Activated CD4-positive, alpha-beta T cell treated with anti-CD3 and anti-CD28 coated beads, Interleukin-2, amount 10 ng/mL, durations not matched to agents 24 days and 14 days (primary cell): ENCODE measurements at regions of chr11 and their contacts with region 1.

Region 1: GRCh38 chr11:62601394-62602140 is at the start of gene MTA2:
- DNase-seq: peak; percentile 100
- H3K4me3 Mint-ChIP-seq: peak within 1 kb of the TSS; percentile 95
- H3K27ac Mint-ChIP-seq: peak within 1 kb of the TSS; percentile 88
- H3K4me1 Mint-ChIP-seq: peaks cover 44% of the 10 kb centered on the region
- H3K27me3 Mint-ChIP-seq: no peaks in the 10 kb centered on the region
- total RNA-seq, gene MTA2: 219 and 220 TPM in 2 replicates

Region 2: DNA sequence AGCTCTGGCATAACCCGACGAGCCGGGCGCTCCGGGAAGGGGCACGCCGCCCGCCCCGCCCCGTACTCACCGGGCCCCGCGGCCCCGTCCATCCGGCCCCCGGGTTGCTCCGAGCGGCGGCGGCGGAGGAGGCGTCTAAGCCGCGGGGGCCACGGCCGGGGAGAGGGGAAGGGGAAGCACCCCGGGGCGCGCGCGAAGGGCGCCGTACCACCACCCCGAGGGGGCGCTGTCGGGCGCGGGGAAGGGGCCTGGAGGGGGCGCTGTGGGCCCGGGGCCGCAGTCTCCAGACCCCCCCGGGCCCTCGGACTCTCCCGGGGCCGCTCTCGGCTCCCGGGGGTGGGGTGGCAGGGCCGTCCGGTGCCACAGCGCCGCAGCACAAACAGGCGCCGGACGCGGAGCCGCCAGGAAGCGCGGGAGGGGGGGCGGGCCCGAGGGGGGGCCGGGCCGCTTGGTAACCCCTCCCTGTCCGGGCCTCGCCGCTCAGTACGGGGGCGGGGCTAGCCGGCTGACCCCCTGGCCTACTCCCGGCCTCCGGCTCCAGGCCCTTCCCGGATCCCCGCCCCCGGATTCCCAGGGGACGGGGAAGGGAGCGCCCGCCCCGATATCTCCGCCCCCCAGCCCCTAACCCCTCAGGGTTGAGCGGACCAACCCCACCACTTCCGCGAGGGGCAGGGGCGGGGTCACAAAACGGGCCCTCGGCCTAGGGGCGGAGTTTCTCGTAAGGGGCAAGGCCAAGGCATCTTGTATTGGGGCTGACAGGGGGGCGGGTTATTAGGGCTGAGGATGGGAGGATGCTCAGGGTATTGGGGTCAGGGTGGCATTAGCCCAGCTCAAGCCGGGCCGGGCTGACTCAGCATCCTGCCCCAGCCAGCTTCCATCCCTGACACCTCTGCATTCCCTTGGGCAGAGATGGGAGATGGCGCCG is 11.1 kb after region 1 on chr11 and contains the starts of genes EML3 and ROM1:
- intact Hi-C with region 1: loop called (anchors 1 kb)
- DNase-seq: peak; percentile 97
- H3K4me3 Mint-ChIP-seq: peak within 1 kb of the TSS; percentile 98
- H3K27ac Mint-ChIP-seq: peak within 1 kb of the TSS; percentile 97
- H3K4me1 Mint-ChIP-seq: peaks cover 46% of the 10 kb centered on the region
- H3K27me3 Mint-ChIP-seq: no peaks in the 10 kb centered on the region
- total RNA-seq, gene EML3: 161 and 166 TPM in 2 replicates
- total RNA-seq, gene ROM1: 2.3 and 3.1 TPM in 2 replicates

Region 3: DNA sequence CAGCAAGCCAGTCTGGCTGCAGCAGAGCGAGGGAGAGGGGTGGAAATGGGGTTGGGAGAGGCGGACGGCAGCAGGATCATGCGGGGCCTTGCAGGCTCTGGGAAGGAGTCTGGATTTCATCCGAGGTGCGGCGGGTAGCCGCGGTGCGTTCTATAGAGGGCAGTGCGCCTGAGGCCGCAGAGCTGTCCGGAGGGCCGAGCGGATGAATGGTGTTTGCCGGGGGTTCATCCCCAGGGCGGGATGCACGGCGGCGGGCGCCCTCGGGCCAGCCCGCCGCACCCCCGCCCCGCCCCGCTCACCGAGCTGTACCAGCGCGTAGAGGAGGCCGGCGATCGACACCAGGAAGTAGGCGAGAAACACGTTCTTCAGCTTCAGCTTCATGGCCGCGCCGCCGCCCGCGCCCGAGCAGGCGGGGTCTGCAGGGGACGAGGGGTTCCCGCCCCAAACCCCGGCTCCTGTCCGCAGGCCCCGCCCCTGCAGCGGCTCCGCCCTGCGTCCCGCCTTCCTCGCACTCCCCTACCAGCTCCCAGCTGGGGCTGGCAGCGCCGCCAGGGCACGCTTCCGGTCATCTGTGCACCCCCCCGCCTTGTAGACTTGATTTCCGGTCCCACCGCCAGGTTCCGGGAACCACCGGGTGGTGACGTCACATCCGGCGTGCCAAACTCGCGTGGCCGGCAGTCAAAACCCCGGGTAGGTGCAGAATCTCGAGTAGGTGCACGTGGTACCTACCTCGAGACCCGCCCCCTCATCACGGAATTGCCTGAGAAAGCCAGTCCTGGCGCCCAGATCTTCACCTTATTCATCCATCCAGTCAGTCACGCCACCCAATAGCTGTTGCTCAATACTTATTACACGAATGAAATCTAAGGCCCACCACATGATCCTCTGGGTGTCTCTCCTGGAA is 20.3 kb after region 1 on chr11 and contains the start of gene B3GAT3:
- intact Hi-C with region 1: loop called (anchors 1 kb)
- DNase-seq: peak; percentile 99
- H3K4me3 Mint-ChIP-seq: peak within 1 kb of the TSS; percentile 97
- H3K27ac Mint-ChIP-seq: peak within 1 kb of the TSS; percentile 99
- H3K4me1 Mint-ChIP-seq: peaks cover 25% of the 10 kb centered on the region
- H3K27me3 Mint-ChIP-seq: peaks cover 1% of the 10 kb centered on the region
- total RNA-seq, gene B3GAT3: 80.3 and 91.4 TPM in 2 replicates